ENCODE measurements at regions of chr16 and their contacts with region 1.

Region 1: GRCh38 chr16:50354629-50355456 is 13.9 kb downstream of the BRD7 start:
- DNase-seq: no peak
- ATAC-seq: no peak
- H3K4me3 Mint-ChIP-seq: no peak overlapping the region
- H3K27ac Mint-ChIP-seq: no peak overlapping the region
- H3K4me1 Mint-ChIP-seq: peaks cover 12% of the 10 kb centered on the region
- H3K27me3 Mint-ChIP-seq: no peaks in the 10 kb centered on the region
- CTCF ChIP-seq: peak; percentile 75

Region 2: DNA sequence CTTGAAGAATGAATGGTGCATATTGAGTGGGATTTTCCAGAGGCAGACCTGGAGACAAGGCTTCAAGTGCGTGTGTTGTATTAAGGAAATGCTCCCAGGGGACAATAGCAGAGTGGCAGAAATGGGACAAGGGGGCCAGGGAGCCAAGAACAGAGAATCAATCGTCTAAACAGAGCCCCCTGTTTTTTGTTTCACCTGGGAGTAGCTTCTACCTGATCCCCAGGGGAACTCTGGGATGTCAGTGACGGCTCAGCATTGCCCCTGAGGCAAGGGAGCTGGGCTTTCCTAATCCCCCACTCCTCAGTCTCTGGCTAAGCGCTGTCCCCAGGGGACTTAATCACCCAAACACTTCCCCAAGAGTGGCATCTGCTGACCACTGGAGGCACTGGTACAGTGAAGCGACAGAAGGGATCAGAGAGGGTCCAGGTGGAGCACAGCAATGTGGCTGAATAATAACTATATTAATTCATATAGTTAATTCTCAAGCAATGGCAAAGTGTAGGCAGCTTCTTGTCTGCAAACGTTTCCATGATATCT is 1017.0 kb before region 1 on chr16:
- CTCF ChIA-PET with region 1: no interaction called
- POLR2A ChIA-PET with region 1: no interaction called
- intact Hi-C with region 1: no loop called
- DNase-seq: no peak
- ATAC-seq: no peak
- H3K4me3 Mint-ChIP-seq: no peak overlapping the region
- H3K27ac Mint-ChIP-seq: no peak overlapping the region
- H3K4me1 Mint-ChIP-seq: no peaks in the 10 kb centered on the region
- H3K27me3 Mint-ChIP-seq: peaks cover 12% of the 10 kb centered on the region
- CTCF ChIP-seq: no peak

Region 3: GRCh38 chr16:50245417-50246298 is 109.2 kb before region 1 on chr16:
- CTCF ChIA-PET with region 1: interaction called, 28 read pairs
- POLR2A ChIA-PET with region 1: interaction called, 3 read pairs
- intact Hi-C with region 1: loop called (anchors 1 kb)
- DNase-seq: peak; percentile 65
- ATAC-seq: peak; percentile 89
- H3K4me3 Mint-ChIP-seq: peak overlapping the region; percentile 77
- H3K27ac Mint-ChIP-seq: no peak overlapping the region
- H3K4me1 Mint-ChIP-seq: peaks cover 5% of the 10 kb centered on the region
- H3K27me3 Mint-ChIP-seq: peaks cover 3% of the 10 kb centered on the region
- CTCF ChIP-seq: no peak

Region 4: DNA sequence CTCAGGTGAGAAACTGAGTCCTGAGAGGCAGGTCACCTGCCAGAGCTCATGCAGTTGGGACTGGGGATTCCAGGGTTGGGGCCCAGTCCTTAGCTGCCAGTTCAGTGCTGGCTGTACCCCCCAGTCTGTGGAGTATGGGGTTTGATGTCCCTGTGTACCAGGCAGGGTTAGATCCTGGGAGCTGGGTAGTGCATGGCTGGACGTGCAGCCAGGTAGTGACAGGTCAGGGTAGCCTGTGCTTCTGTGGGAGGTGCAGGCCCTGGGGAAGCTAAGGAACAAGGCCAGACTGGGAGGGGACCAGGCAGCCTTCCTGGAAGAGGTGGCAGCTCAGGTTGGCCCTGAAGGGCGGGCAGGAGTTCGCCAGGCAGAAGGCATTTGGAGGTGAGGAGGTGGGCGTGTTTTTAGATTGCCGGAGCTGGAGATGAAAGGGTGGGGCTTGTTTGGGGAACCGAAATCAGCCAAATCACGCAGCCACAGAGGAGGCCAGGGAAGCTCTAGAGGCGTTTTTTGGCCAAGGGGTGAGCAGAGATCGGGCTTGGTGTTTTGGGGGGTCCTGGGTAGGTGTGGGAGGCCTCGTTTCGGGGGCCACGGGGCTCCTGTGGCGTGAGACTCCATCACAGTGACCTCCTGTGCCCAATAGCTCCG is 81.0 kb before region 1 on chr16:
- CTCF ChIA-PET with region 1: interaction called, 12 read pairs
- POLR2A ChIA-PET with region 1: no interaction called
- intact Hi-C with region 1: no loop called
- DNase-seq: no peak
- ATAC-seq: peak; percentile 82
- H3K4me3 Mint-ChIP-seq: peak overlapping the region; percentile 99
- H3K27ac Mint-ChIP-seq: peak overlapping the region; percentile 100
- H3K4me1 Mint-ChIP-seq: peaks cover 92% of the 10 kb centered on the region
- H3K27me3 Mint-ChIP-seq: no peaks in the 10 kb centered on the region
- CTCF ChIP-seq: no peak

Region 5: DNA sequence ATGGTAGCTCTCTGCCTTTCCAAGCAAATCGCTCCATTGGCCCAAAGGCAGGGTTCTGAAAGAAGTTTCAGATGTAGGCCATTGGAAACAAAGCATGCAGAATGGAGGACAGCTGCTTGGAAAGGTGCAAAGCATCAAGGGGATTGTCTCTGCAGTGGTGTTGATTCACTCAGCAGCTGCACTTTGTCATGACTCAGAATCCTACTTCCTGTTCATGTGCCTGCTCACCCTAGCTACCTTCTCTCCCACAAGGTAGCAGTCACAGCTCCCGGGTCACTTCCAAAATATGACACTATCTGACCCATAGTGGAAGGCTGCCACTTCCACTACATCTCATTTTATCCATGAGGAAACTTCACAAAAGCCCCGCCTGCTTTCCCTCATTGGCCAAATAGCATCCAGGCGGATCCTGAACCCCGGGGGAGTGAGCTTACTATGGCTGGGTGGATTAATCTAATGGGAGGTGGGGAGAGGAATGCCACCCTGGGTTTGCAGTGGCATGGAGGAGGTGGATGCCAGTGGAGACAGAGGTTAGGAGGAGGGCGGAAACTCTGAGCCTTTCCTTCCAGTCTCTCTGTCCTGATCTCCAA is 118.6 kb after region 1 on chr16:
- CTCF ChIA-PET with region 1: no interaction called
- POLR2A ChIA-PET with region 1: no interaction called
- intact Hi-C with region 1: no loop called
- DNase-seq: no peak
- ATAC-seq: no peak
- H3K4me3 Mint-ChIP-seq: no peak overlapping the region
- H3K27ac Mint-ChIP-seq: no peak overlapping the region
- H3K4me1 Mint-ChIP-seq: peaks cover 5% of the 10 kb centered on the region
- H3K27me3 Mint-ChIP-seq: peaks cover 30% of the 10 kb centered on the region
- CTCF ChIP-seq: no peak

Region 6: GRCh38 chr16:50665128-50665878 is 310.5 kb after region 1 on chr16:
- CTCF ChIA-PET with region 1: interaction called, 14 read pairs
- POLR2A ChIA-PET with region 1: interaction called, 3 read pairs
- intact Hi-C with region 1: no loop called
- DNase-seq: peak; percentile 68
- ATAC-seq: peak; percentile 70
- H3K4me3 Mint-ChIP-seq: peak overlapping the region; percentile 81
- H3K27ac Mint-ChIP-seq: peak overlapping the region; percentile 65
- H3K4me1 Mint-ChIP-seq: peaks cover 23% of the 10 kb centered on the region
- H3K27me3 Mint-ChIP-seq: no peaks in the 10 kb centered on the region
- CTCF ChIP-seq: no peak

Region 7: GRCh38 chr16:50806099-50807062 is 451.5 kb after region 1 on chr16:
- CTCF ChIA-PET with region 1: interaction called, 11 read pairs
- POLR2A ChIA-PET with region 1: no interaction called
- intact Hi-C with region 1: no loop called
- DNase-seq: peak; percentile 64
- ATAC-seq: peak; percentile 95
- H3K4me3 Mint-ChIP-seq: peak overlapping the region; percentile 77
- H3K27ac Mint-ChIP-seq: peak overlapping the region; percentile 73
- H3K4me1 Mint-ChIP-seq: peaks cover 17% of the 10 kb centered on the region
- H3K27me3 Mint-ChIP-seq: peaks cover 10% of the 10 kb centered on the region
- CTCF ChIP-seq: peak; percentile 80

Measured in activated B cell treated with CpG ODN at 0.5 μM for 24 hours (primary cell).